ENCODE measurements at regions of chr7 and their contacts with region 1.

Region 1: DNA sequence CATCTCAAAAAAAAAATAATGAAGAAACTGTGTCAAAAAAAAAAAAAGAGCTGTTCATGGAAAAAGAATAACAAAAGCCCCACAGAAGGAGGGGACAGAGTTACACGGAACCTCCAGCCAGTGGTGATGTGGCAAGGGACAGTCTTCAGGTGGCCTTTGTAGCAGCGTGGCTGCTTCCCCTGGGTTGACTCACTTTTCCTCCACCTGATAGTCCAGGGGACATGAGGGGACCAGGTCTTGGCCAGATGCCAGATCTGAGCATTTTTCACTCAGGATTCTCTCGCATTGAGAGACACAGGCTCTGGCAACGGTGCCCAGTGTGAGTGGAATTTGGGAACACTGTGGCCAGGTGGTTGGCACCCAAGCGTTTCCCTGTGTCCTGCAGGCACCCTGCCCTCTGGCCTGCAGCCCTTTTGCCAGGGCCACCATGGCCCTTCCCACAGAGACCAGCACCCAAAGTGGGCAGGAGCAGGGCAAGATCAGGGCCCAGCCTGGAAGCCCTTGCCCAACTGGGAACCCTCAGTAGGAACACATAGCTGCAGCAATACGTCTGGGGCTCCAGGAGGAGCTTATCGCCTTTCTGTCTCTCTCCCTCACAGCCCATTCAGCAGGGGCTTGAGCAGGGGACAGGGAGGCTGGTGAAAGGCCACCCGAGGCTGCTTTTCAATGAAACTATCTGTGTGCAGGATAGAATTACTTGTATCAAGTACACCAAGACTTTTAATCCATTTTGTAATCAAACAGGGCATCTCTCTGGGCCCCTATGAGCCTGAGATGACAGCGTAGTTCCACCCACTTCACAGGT is 159.1 kb downstream of the UBE2H start:
- DNase-seq: peak; percentile 75

Region 2: DNA sequence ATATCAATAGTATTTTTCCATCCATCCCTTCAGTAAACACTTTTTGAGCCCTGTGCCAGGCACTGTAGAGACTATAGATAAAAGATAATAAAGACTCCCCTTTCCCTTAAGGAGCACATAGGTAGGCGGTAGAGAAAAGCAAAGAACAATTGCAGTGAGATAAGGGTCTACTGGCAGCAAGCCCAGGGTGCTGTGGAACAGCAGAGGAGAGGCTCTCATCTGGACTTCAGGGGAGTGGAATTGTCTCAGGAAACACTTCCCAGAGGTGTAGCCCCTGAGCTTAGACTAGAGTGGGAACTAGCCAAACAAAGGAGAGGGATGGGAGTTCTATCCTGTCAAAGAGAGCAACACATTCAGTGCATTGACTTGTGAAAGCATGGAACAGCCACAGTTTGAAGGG is 80.2 kb before region 1 on chr7:
- intact Hi-C with region 1: loop called in 1 of 2 experiments (anchors 1 kb)
- DNase-seq: no peak